ENCODE measurements at regions of chr18 and their contacts with region 1.

Region 1: DNA sequence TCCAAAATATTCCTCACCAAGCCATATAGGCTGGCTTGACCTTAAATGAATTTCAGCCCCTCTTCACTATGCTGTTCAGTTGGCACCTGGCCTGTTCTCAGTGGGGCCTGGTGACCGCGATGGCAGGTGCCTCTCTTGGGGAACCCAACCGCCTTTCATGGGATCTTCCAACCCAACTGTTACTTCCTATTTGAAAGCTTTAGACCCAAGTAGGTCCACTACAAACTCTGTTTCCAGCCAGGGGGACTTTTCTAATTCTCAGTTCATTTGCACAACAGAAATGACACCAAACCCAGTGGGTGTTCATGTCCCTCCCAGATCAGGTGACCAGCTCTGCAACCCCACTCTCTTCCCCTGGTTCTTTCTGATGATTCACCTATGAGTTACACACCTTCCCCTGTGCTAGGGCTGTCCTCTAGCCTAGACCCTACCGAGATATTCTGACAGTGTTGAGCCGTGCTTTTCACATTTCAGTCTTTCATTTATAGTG is 35.6 kb upstream of the NDUFV2 start:
- DNase-seq: no peak
- ATAC-seq: peak; percentile 72
- H3K4me3 Mint-ChIP-seq: peak overlapping the region; percentile 62
- H3K27ac Mint-ChIP-seq: peak overlapping the region; percentile 91
- H3K4me1 Mint-ChIP-seq: peaks cover 73% of the 10 kb centered on the region
- H3K27me3 Mint-ChIP-seq: no peaks in the 10 kb centered on the region
- CTCF ChIP-seq: no peak

Region 2: GRCh38 chr18:8654503-8655451 is 412.1 kb before region 1 on chr18:
- CTCF ChIA-PET with region 1: interaction called, 3 read pairs
- POLR2A ChIA-PET with region 1: no interaction called
- intact Hi-C with region 1: loop called (anchors 2 kb)
- DNase-seq: no peak
- ATAC-seq: no peak
- H3K4me3 Mint-ChIP-seq: no peak overlapping the region
- H3K27ac Mint-ChIP-seq: no peak overlapping the region
- H3K4me1 Mint-ChIP-seq: peaks cover 6% of the 10 kb centered on the region
- H3K27me3 Mint-ChIP-seq: no peaks in the 10 kb centered on the region
- CTCF ChIP-seq: peak; percentile 67

Region 3: DNA sequence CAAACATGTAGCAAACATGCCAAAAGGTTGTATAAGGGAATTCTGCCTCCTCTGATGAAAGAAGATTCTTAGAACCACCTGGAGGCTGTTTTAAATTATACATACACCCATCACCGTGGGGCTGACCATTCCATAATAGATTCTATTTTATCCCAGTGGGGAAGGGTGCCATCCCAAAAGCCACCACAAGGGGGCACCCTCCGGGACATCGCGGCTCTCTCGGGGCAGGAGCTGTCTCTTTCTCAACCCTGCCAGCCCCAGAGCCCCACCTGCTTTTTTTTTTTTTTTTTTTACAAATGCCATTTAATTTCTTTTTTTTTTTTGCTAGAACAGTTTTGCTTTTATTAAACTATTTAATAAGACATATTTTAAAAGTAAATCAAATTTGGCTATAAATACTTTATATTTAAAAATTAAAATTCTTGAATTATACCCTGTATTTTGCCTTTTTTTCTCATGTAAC is 370.1 kb before region 1 on chr18:
- CTCF ChIA-PET with region 1: no interaction called
- POLR2A ChIA-PET with region 1: no interaction called
- intact Hi-C with region 1: loop called (anchors 5 kb)
- DNase-seq: peak; percentile 74
- ATAC-seq: peak; percentile 82
- H3K4me3 Mint-ChIP-seq: no peak overlapping the region
- H3K27ac Mint-ChIP-seq: no peak overlapping the region
- H3K4me1 Mint-ChIP-seq: peaks cover 12% of the 10 kb centered on the region
- H3K27me3 Mint-ChIP-seq: no peaks in the 10 kb centered on the region
- CTCF ChIP-seq: peak; percentile 62

Region 4: GRCh38 chr18:9109523-9109922 is 42.7 kb after region 1 on chr18:
- CTCF ChIA-PET with region 1: interaction called, 4 read pairs
- POLR2A ChIA-PET with region 1: interaction called, 12 read pairs
- intact Hi-C with region 1: no loop called
- DNase-seq: no peak
- ATAC-seq: no peak
- H3K4me3 Mint-ChIP-seq: peak overlapping the region; percentile 2
- H3K27ac Mint-ChIP-seq: peak overlapping the region; percentile 99
- H3K4me1 Mint-ChIP-seq: peaks cover 97% of the 10 kb centered on the region
- H3K27me3 Mint-ChIP-seq: no peaks in the 10 kb centered on the region
- CTCF ChIP-seq: no peak

Region 5: GRCh38 chr18:9210966-9211365 is 144.1 kb after region 1 on chr18:
- CTCF ChIA-PET with region 1: no interaction called
- POLR2A ChIA-PET with region 1: interaction called, 8 read pairs
- intact Hi-C with region 1: loop called (anchors 5 kb)
- DNase-seq: no peak
- ATAC-seq: no peak
- H3K4me3 Mint-ChIP-seq: no peak overlapping the region
- H3K27ac Mint-ChIP-seq: no peak overlapping the region
- H3K4me1 Mint-ChIP-seq: peaks cover 7% of the 10 kb centered on the region
- H3K27me3 Mint-ChIP-seq: no peaks in the 10 kb centered on the region
- CTCF ChIP-seq: no peak